Ascending aorta (tissue), 2 donors: ENCODE measurements at regions of chr2 and their contacts with region 1.

Region 1: GRCh38 chr2:38665854-38666555 is at the start of gene GALM:
- DNase-seq: peak; percentile 59 to 93
- H3K4me3 ChIP-seq: peak within 1 kb of the TSS; percentile 78 to 80
- H3K27ac ChIP-seq: peak within 1 kb of the TSS; percentile 60 to 80
- H3K4me1 ChIP-seq: peaks cover 0 to 7% of the 10 kb centered on the region in 2 donors
- H3K27me3 ChIP-seq: no peaks in the 10 kb centered on the region
- CTCF ChIP-seq: no peak
- total RNA-seq, gene GALM: 1.4 TPM

Region 2: GRCh38 chr2:38602732-38603401 is 63.1 kb before region 1 on chr2 and contains the start of gene HNRNPLL:
- intact Hi-C with region 1: loop called (anchors 1 kb)
- DNase-seq: peak; percentile 91 to 98
- H3K4me3 ChIP-seq: peak within 1 kb of the TSS; percentile 90 to 91
- H3K27ac ChIP-seq: peak within 1 kb of the TSS; percentile 96 to 99
- H3K4me1 ChIP-seq: peaks cover 4 to 29% of the 10 kb centered on the region in 2 donors
- H3K27me3 ChIP-seq: no peaks in the 10 kb centered on the region
- CTCF ChIP-seq: no peak
- total RNA-seq, gene HNRNPLL: 10.6 TPM

Region 3: GRCh38 chr2:38619458-38620164 is 46.4 kb before region 1 on chr2:
- intact Hi-C with region 1: loop called (anchors 5 kb)
- DNase-seq: no peak
- H3K4me3 ChIP-seq: no peak overlapping the region
- H3K27ac ChIP-seq: peak overlapping the region; percentile 31 to 32
- H3K4me1 ChIP-seq: peaks cover 0 to 17% of the 10 kb centered on the region in 2 donors
- H3K27me3 ChIP-seq: no peaks in the 10 kb centered on the region
- CTCF ChIP-seq: no peak

Region 4: DNA sequence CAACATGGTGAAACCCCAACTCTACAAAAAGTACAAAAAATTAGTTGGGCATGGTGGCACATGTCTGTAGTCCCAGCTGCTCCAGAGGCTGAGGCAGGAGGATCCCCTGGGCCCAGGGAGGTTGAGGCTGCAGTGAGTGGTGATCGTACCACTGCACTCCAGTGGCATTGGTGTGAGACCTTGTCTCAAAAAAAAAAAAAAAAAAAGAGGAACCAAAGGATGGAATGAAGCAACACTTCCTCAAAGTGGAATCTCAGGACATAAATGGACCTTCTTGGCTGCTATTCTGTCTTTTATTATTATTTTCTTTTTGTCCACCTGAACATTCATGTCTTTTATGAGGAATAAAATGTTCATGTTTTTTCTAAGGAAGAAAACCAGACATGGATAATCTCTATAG is 125.7 kb after region 1 on chr2:
- intact Hi-C with region 1: no loop called
- DNase-seq: no peak
- H3K4me3 ChIP-seq: no peak overlapping the region
- H3K27ac ChIP-seq: no peak overlapping the region
- H3K4me1 ChIP-seq: no peaks in the 10 kb centered on the region
- H3K27me3 ChIP-seq: no peaks in the 10 kb centered on the region
- CTCF ChIP-seq: no peak

Region 5: GRCh38 chr2:39252888-39253518 is 587.0 kb after region 1 on chr2:
- intact Hi-C with region 1: no loop called
- DNase-seq: no peak
- H3K4me3 ChIP-seq: no peak overlapping the region
- H3K27ac ChIP-seq: no peak overlapping the region
- H3K4me1 ChIP-seq: no peaks in the 10 kb centered on the region
- H3K27me3 ChIP-seq: no peaks in the 10 kb centered on the region
- CTCF ChIP-seq: no peak